Pancreas (tissue), 10 donors: ENCODE measurements at regions of chr6 and their contacts with region 1.

Region 1: GRCh38 chr6:131199568-131200272 is 64.5 kb downstream of the AKAP7 start:
- DNase-seq: peak in 1 of 6 donors; percentile 20
- ATAC-seq: peak; percentile 35 to 94 (median 84)
- H3K4me3 ChIP-seq: no peak overlapping the region
- H3K27ac ChIP-seq: no peak overlapping the region
- H3K4me1 ChIP-seq: no peaks in the 10 kb centered on the region
- H3K27me3 ChIP-seq: no peaks in the 10 kb centered on the region
- CTCF ChIP-seq: peak in 3 of 4 donors; percentile 7 to 30 (median 17)

Region 2: GRCh38 chr6:131107151-131107550 is 92.6 kb before region 1 on chr6:
- intact Hi-C with region 1: no loop called
- DNase-seq: no peak
- ATAC-seq: peak in 3 of 4 donors; percentile 51 to 72 (median 54)
- H3K4me3 ChIP-seq: no peak overlapping the region
- H3K27ac ChIP-seq: no peak overlapping the region
- H3K4me1 ChIP-seq: no peaks in the 10 kb centered on the region
- H3K27me3 ChIP-seq: no peaks in the 10 kb centered on the region
- CTCF ChIP-seq: no peak

Region 3: DNA sequence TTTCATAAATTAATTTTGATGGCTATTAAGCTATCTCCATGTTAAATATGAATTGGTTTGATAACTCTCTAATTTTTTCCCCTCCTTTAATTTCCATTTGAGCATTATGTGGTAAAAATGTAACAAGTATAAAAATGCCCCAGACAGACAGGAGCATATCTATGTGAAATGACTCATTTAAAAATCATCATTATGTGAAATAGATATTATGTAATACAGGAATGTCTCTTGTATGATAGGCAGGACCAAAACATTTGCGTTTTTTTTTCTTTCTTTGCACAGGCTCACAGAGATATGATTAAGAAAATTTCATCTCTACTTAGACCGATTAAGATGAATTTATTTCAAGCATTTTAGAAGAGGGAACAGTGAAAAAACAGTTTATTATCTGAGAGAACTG is 31.4 kb after region 1 on chr6:
- intact Hi-C with region 1: no loop called
- DNase-seq: no peak
- ATAC-seq: no peak
- H3K4me3 ChIP-seq: no peak overlapping the region
- H3K27ac ChIP-seq: no peak overlapping the region
- H3K4me1 ChIP-seq: peaks cover 0 to 1% (median 0%) of the 10 kb centered on the region in 3 donors
- H3K27me3 ChIP-seq: no peaks in the 10 kb centered on the region
- CTCF ChIP-seq: no peak

Region 4: DNA sequence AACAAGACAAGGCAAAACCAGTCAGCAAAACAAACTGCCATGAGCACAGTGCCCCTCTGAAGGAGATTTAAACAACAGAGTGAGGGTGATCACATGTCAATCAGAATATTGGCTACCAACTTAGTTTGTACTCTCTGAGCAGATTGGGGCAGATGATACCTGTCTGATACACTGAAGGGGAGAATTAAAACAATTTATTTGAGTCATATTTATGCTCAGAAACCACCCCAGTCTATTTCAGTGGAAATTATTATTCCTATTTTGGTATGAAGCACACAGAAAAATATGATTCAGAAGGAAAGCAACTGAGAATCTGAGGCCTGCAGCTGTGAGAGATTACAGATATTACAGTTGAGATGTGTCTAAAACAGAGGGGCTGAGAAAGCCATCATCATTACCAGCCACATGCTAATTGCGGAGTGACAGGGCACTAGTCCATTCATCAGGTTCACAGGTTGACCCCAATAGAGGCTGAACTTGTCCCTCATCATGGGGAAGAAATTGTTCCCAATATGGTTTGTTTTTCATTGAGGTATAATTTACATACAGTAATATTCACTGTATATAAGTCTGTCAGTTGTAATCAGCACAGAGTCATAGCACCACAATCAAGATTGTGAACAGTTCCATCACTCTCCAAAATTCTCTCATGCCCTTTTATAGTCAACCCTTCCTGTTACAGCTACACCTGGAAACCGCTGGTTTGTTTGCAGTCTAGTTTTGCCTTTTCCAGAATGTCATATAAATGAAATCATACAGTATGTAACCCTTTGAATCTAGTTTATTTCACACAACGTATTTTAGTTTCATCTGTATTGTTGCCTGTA is 70.1 kb after region 1 on chr6:
- intact Hi-C with region 1: no loop called
- DNase-seq: no peak
- ATAC-seq: no peak
- H3K4me3 ChIP-seq: no peak overlapping the region
- H3K27ac ChIP-seq: no peak overlapping the region
- H3K4me1 ChIP-seq: no peaks in the 10 kb centered on the region
- H3K27me3 ChIP-seq: no peaks in the 10 kb centered on the region
- CTCF ChIP-seq: no peak

Region 5: DNA sequence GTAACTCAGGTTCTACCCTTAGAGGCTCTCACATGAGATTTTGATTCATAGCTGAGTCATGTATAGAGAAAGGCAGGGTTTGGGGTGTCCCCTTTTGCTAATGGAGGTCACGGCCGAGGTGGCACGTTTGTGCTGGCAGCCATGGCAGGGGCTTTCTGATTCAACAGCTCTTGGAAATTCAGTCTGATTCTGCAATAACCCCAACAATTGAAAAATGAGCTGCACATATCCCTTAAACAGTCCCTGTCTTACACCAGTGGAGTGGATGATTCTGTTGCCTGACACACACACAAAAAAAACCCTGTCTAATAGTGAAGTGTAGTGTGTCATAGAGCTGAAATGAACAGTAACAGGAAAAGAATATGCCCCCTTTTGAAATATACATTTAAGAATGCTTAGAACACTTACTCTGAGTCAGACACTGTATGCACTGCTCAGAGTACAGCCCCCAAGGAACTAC is 332.9 kb after region 1 on chr6:
- intact Hi-C with region 1: loop called in 1 of 3 experiments (anchors 5 kb)
- DNase-seq: no peak
- ATAC-seq: no peak
- H3K4me3 ChIP-seq: no peak overlapping the region
- H3K27ac ChIP-seq: no peak overlapping the region
- H3K4me1 ChIP-seq: no peaks in the 10 kb centered on the region
- H3K27me3 ChIP-seq: no peaks in the 10 kb centered on the region
- CTCF ChIP-seq: no peak